Activated T-helper 1 cell treated with anti-CD3 and anti-CD28 coated beads, Interleukin-12 subunit alpha, Interleukin-12 subunit beta, Interleukin-2, Interleukin-4 antibody, amounts not matched to agents 30 ng/mL and 10 ng/mL and 1 ng/mL, durations not matched to agents 14 hours and 24 hours and 36 hours (primary cell): ENCODE measurements at regions of chr1 and their contacts with region 1.

Region 1: DNA sequence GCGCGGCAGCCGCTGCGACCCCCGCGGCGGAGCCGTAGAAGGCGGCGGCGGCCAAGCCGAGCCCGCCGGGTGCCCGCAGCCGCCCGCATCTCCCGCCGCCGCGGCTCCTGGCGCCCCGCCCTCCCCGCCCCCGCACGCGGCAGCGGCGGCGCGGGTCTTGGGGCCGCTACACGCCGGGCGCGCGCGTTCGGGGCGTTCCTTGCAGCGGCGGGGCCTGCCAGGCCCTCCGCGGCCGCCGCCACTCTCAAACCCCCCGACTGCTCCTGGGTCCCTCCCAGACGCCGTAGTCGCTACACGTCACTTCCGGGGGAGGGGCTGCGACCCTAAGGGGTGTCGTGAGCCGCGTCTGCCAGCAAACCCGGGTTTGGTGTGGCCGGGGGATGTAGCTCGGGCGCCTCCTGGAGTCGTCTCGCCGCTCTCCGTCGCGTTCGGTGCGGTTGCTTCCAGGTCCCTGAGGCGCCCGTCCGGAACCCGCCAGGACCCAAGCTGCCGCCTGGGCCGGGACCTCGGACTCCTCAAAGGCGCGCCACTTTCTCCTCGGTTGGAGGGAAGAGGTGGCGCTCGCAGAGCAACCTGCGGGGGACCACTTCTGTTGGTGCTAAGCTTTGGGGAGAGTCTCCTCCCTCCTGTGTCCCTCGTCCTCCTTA is at the start of gene ELK4:
- DNase-seq: peak; percentile 99
- H3K4me3 Mint-ChIP-seq: peak within 1 kb of the TSS; percentile 97
- H3K27ac Mint-ChIP-seq: peak within 1 kb of the TSS; percentile 99
- H3K4me1 Mint-ChIP-seq: peaks cover 53% of the 10 kb centered on the region
- H3K27me3 Mint-ChIP-seq: peaks cover 10% of the 10 kb centered on the region
- total RNA-seq, gene ELK4: 81.1 and 86.2 TPM in 2 replicates

Region 2: GRCh38 chr1:205211169-205211838 is 420.5 kb before region 1 on chr1 and contains the start of gene DSTYK:
- intact Hi-C with region 1: loop called (anchors 1 kb)
- DNase-seq: peak; percentile 89
- H3K4me3 Mint-ChIP-seq: peak within 1 kb of the TSS; percentile 99
- H3K27ac Mint-ChIP-seq: peak within 1 kb of the TSS; percentile 94
- H3K4me1 Mint-ChIP-seq: peaks cover 49% of the 10 kb centered on the region
- H3K27me3 Mint-ChIP-seq: no peaks in the 10 kb centered on the region
- total RNA-seq, gene DSTYK: 34.2 and 35.9 TPM in 2 replicates

Region 3: DNA sequence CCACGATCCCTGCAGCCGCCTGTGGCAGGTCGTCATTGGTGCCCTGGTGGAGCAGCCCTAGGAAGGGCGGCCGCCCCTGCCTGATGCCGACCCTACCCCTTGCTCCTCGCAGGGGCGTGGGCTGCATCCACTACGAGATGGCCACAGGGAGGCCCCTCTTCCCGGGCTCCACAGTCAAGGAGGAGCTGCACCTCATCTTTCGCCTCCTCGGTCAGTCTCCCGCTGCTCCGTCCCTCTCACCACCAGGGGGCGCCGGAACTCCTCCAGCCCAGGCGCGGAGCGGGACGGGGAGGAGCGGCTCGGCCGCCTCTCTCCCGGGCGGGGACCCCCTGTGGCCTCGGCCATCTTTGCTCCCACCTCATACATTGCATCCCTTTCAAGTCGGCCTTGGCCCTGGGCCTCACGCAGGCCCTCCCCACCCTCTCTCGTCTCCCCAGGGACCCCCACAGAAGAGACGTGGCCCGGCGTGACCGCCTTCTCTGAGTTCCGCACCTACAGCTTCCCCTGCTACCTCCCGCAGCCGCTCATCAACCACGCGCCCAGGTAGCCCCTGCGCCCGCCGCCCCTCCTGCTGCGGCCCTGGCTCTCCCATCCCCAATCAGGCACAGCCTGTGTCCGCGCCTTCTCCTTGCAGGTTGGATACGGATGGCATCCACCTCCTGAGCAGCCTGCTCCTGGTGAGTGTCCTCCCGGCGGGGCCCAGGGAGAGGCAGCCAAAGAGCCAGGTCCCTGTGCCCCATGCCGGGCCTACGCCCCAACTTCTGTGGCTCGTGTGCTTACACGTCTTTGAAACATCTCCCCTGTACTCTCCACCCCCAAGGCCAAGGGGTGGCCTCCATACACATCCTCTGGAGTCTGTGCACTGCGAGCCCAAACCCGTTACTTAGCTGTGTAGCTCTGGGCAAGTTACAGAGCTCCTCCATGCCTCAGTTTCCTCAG is 102.7 kb before region 1 on chr1:
- intact Hi-C with region 1: loop called (anchors 1 kb)
- DNase-seq: peak; percentile 68
- H3K4me3 Mint-ChIP-seq: no peak overlapping the region
- H3K27ac Mint-ChIP-seq: no peak overlapping the region
- H3K4me1 Mint-ChIP-seq: no peaks in the 10 kb centered on the region
- H3K27me3 Mint-ChIP-seq: no peaks in the 10 kb centered on the region

Region 4: GRCh38 chr1:205584732-205585131 is 47.1 kb before region 1 on chr1:
- intact Hi-C with region 1: no loop called
- DNase-seq: no peak
- H3K4me3 Mint-ChIP-seq: no peak overlapping the region
- H3K27ac Mint-ChIP-seq: no peak overlapping the region
- H3K4me1 Mint-ChIP-seq: no peaks in the 10 kb centered on the region
- H3K27me3 Mint-ChIP-seq: peaks cover 7% of the 10 kb centered on the region

Region 5: DNA sequence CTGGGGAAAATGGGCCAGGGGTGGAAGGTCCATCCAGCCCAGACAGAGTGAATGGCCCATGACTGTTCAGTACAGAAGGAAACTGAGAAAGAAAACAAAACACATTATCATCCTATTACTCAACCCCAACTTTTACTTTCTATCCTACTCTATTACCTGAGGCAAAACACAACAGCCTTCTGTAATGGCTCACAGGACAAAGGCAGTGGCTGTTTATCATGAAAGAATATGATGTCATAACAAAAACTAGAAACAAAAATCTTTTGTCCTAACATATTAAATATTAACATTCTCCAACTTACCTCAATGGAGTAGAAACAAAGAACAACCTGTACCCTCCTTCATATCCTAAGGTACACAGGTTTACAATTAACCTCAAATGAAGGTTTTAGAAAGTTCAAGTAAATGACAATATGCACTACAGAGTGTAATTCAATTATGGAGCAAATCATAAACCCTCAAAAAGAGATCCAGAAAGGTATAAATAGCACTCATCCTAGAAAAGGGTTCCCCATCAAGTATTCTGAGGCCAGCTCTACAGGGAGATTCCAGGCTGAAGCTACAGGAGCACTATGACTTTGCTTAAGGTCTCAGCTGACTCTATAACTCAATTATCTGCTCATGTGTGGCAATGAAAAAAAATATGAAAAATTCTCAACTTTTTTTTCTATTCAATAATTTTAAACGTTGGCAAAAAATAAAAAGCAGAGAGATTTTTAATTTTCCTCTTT is 15.1 kb before region 1 on chr1:
- intact Hi-C with region 1: loop called (anchors 2 kb)
- DNase-seq: no peak
- H3K4me3 Mint-ChIP-seq: no peak overlapping the region
- H3K27ac Mint-ChIP-seq: no peak overlapping the region
- H3K4me1 Mint-ChIP-seq: peaks cover 32% of the 10 kb centered on the region
- H3K27me3 Mint-ChIP-seq: no peaks in the 10 kb centered on the region

Region 6: GRCh38 chr1:205750138-205751035 is 118.5 kb after region 1 on chr1 and contains the start of gene NUCKS1:
- intact Hi-C with region 1: loop called (anchors 1 kb)
- DNase-seq: peak; percentile 96
- H3K4me3 Mint-ChIP-seq: peak within 1 kb of the TSS; percentile 99
- H3K27ac Mint-ChIP-seq: peak within 1 kb of the TSS; percentile 97
- H3K4me1 Mint-ChIP-seq: peaks cover 46% of the 10 kb centered on the region
- H3K27me3 Mint-ChIP-seq: no peaks in the 10 kb centered on the region
- total RNA-seq, gene NUCKS1: 146 and 147 TPM in 2 replicates

Region 7: GRCh38 chr1:206479183-206480125 is 847.6 kb after region 1 on chr1:
- intact Hi-C with region 1: no loop called
- DNase-seq: peak; percentile 25
- H3K4me3 Mint-ChIP-seq: no peak overlapping the region
- H3K27ac Mint-ChIP-seq: peak overlapping the region; percentile 85
- H3K4me1 Mint-ChIP-seq: peaks cover 31% of the 10 kb centered on the region
- H3K27me3 Mint-ChIP-seq: no peaks in the 10 kb centered on the region